PC-9 (cell line): ENCODE measurements at regions of chr13 and their contacts with region 1.

Region 1: DNA sequence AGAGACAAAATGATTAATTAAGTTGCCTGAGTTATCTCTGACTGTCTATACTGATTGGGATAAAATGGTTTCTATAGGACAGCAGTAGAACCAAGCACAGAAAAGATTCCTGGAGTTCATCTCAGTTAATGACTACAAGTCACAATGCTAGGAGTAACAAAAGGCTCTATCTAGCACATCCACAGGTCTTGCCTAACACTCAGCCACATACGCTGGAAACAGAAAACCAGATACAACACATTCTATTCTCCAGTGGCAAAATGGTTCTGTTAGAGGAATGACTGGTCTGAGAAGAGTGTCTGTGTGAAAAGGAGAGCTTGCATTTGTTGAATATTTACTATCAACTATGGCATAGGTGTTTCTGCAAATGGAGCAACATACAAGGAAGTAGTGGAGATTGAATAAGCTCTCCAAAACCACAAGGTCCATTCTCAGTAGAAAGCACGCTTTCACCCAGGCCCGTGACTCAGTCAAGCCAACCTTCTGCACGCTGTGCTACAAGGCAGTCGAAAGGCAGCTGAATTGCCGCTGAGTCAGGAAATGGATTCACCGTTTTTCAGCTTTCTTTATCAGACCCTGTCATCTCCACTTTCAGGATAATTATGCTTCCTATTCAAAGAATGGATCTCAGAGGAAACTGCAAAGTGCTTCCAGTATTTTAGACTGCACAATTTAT is 761.5 kb downstream of the EFNB2 start:
- DNase-seq: peak; percentile 76 to 99
- H3K4me3 ChIP-seq: peak overlapping the region; percentile 43
- H3K27ac ChIP-seq: peak overlapping the region; percentile 89
- H3K4me1 ChIP-seq: peaks cover 36% of the 10 kb centered on the region
- H3K27me3 ChIP-seq: no peaks in the 10 kb centered on the region
- CTCF ChIP-seq: no peak

Region 2: DNA sequence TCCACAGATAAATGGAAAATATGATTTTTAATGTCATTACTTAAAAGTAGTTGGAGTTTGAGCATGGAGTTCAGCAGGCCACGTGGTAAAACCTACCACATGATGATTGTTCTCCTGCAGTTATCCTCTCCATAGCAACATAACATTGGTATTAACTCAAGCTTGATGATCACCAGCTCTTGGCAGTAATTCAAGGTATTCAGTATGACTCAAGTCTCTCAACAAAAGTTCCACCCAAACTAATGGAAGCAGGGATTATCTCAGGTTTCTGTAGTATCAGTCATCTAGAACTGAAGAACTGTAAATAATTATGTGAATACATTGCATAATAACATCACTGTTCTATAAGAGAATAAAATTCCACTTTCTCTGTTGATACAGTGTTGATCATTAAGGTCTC is 331.1 kb before region 1 on chr13:
- CTCF ChIA-PET with region 1: no interaction called
- POLR2A ChIA-PET with region 1: no interaction called
- intact Hi-C with region 1: loop called (anchors 1 kb)
- DNase-seq: peak; percentile 28 to 98
- H3K4me3 ChIP-seq: no peak overlapping the region
- H3K27ac ChIP-seq: peak overlapping the region; percentile 68
- H3K4me1 ChIP-seq: peaks cover 16% of the 10 kb centered on the region
- H3K27me3 ChIP-seq: no peaks in the 10 kb centered on the region
- CTCF ChIP-seq: no peak

Region 3: DNA sequence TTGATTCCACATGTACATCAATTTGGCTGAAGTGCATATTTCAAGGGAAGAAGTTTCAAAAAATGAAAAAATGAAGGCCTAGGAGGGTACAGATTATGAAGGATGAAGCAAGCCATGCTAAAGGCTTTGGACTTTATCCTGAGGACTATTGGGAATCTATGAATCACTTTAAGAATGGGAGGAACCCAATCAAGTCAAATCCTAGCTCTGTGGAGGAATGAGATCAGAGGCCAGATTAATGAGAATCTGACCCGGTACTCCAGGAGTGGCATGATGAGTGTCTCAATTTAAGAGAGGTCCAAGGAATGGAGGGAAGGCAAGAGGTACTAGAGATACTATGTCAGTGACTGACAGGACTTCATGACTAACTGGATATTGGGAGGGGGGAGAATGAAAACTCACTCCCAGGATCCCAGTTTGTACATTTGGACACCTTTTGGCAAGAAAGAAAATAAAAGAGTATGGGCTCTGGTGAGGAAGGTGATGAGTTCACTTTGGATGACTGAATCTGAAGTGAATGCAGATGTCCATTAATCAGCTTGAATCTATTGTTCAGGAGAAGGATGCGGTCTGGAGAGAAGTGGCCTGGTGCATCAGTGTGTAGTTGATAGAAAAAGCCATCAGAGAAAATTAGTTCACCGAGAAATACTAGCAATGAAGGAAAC is 412.5 kb after region 1 on chr13:
- CTCF ChIA-PET with region 1: no interaction called
- POLR2A ChIA-PET with region 1: no interaction called
- intact Hi-C with region 1: no loop called
- DNase-seq: no peak
- H3K4me3 ChIP-seq: no peak overlapping the region
- H3K27ac ChIP-seq: no peak overlapping the region
- H3K4me1 ChIP-seq: peaks cover 12% of the 10 kb centered on the region; the same call in 1 of the 2 replicates
- H3K27me3 ChIP-seq: no peaks in the 10 kb centered on the region
- CTCF ChIP-seq: no peak